HCT116 (cell line): ENCODE measurements at regions of chr12 and their contacts with region 1.

Region 1: GRCh38 chr12:64801381-64801780 is 23.1 kb upstream of the TBC1D30 start:
- DNase-seq: no peak
- ATAC-seq: peak; percentile 80
- H3K4me3 ChIP-seq: no peak overlapping the region
- H3K27ac ChIP-seq: no peak overlapping the region
- H3K4me1 ChIP-seq: peaks cover 0 to 9% of the 10 kb centered on the region in 2 experiments; a peak in 2 of 4 replicates
- H3K27me3 ChIP-seq: no peaks in the 10 kb centered on the region
- CTCF ChIP-seq: peak; percentile 57 to 98 (median 70)
- POLR2A ChIP-seq: no peak
- RAD21 ChIP-seq: peak; percentile 47; the same call in 1 of the 2 replicates

Region 2: GRCh38 chr12:64352181-64352580 is 449.2 kb before region 1 on chr12:
- CTCF ChIA-PET with region 1: no interaction called
- POLR2A ChIA-PET with region 1: no interaction called
- RAD21 ChIA-PET with region 1: no interaction called
- intact Hi-C with region 1: no loop called
- DNase-seq: no peak
- ATAC-seq: no peak
- H3K4me3 ChIP-seq: no peak overlapping the region
- H3K27ac ChIP-seq: no peak overlapping the region
- H3K4me1 ChIP-seq: no peaks in the 10 kb centered on the region
- H3K27me3 ChIP-seq: no peaks in the 10 kb centered on the region
- CTCF ChIP-seq: peak in 1 of 3 experiments; percentile 26; a peak in 2 of 6 replicates
- POLR2A ChIP-seq: no peak
- RAD21 ChIP-seq: no peak

Region 3: DNA sequence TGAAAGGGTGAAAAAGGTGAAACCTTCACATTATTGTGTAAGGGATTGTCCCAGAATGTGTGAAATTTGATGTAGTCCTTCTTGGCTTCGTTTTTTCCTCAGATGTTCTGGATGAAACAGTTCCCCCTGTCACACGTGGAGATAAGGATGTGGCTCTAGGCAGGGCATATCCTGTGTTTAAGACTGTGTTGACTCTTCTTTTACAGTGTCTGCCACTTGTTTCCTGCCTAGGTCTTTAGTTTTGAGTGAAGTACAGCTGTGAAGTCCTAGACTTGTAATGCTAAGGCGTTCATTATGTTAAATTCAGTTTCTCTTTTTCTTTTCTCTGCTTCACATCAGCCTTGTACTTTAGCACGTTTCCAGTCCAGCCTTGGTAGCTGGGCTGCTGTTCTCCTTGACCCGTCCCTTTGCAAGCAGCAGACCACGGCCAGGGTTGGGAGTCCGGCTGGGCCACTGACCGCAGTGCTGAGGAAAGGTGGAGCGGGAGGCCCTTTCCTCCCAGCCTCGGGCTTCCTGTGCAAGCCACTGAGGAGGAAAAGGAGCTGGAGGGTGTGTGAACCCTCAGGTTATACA is 132.0 kb before region 1 on chr12:
- CTCF ChIA-PET with region 1: no interaction called
- POLR2A ChIA-PET with region 1: no interaction called
- RAD21 ChIA-PET with region 1: no interaction called
- intact Hi-C with region 1: no loop called
- DNase-seq: no peak
- ATAC-seq: no peak
- H3K4me3 ChIP-seq: no peak overlapping the region
- H3K27ac ChIP-seq: peak overlapping the region; percentile 80
- H3K4me1 ChIP-seq: peaks cover 69 to 88% of the 10 kb centered on the region in 2 experiments
- H3K27me3 ChIP-seq: no peaks in the 10 kb centered on the region
- CTCF ChIP-seq: no peak
- POLR2A ChIP-seq: no peak
- RAD21 ChIP-seq: no peak

Region 4: GRCh38 chr12:64780531-64781279 is 20.7 kb before region 1 on chr12:
- CTCF ChIA-PET with region 1: interaction called, 23 read pairs
- POLR2A ChIA-PET with region 1: interaction called, 5 read pairs
- RAD21 ChIA-PET with region 1: no interaction called
- intact Hi-C with region 1: no loop called
- DNase-seq: no peak
- ATAC-seq: peak; percentile 85
- H3K4me3 ChIP-seq: peak overlapping the region; percentile 57 to 78
- H3K27ac ChIP-seq: peak overlapping the region; percentile 88
- H3K4me1 ChIP-seq: peaks cover 12 to 20% of the 10 kb centered on the region in 2 experiments
- H3K27me3 ChIP-seq: no peaks in the 10 kb centered on the region
- CTCF ChIP-seq: 0 out of 6 replicates have a peak, but pooled peaks of 1 of the 3 experiments have one; percentile 5
- POLR2A ChIP-seq: peak; percentile 31
- RAD21 ChIP-seq: no peak

Region 5: DNA sequence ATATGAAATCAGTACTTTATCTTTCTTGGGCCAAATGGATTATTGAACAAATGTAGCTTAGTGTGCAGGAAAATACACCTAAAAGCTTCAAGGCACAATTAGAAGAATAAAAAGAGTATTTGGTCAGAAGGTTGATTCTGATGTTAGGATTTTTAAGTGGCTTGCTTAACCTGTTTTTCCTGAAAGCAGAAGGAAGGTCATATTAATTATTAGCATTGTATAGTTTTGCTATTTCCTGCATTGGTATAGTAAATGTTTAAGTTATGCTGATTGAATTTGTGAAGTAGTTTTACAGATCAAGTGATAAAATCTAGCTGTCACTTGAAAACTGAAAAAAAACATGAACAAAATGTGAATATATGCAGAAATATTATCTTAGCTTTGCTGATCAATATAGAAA is 11.2 kb before region 1 on chr12:
- CTCF ChIA-PET with region 1: interaction called, 25 read pairs
- POLR2A ChIA-PET with region 1: interaction called, 4 read pairs
- RAD21 ChIA-PET with region 1: no interaction called
- intact Hi-C with region 1: no loop called
- DNase-seq: no peak
- ATAC-seq: no peak
- H3K4me3 ChIP-seq: no peak overlapping the region
- H3K27ac ChIP-seq: no peak overlapping the region
- H3K4me1 ChIP-seq: no peaks in the 10 kb centered on the region
- H3K27me3 ChIP-seq: no peaks in the 10 kb centered on the region
- CTCF ChIP-seq: no peak
- POLR2A ChIP-seq: no peak
- RAD21 ChIP-seq: no peak

Region 6: GRCh38 chr12:64883596-64884542 is 82.5 kb after region 1 on chr12:
- CTCF ChIA-PET with region 1: interaction called, 11 read pairs
- POLR2A ChIA-PET with region 1: no interaction called
- RAD21 ChIA-PET with region 1: no interaction called
- intact Hi-C with region 1: no loop called
- DNase-seq: no peak
- ATAC-seq: peak; percentile 64
- H3K4me3 ChIP-seq: no peak overlapping the region
- H3K27ac ChIP-seq: no peak overlapping the region
- H3K4me1 ChIP-seq: no peaks in the 10 kb centered on the region
- H3K27me3 ChIP-seq: no peaks in the 10 kb centered on the region
- CTCF ChIP-seq: peak in 1 of 3 experiments; percentile 21; a peak in 2 of 6 replicates
- POLR2A ChIP-seq: no peak
- RAD21 ChIP-seq: no peak

Region 7: DNA sequence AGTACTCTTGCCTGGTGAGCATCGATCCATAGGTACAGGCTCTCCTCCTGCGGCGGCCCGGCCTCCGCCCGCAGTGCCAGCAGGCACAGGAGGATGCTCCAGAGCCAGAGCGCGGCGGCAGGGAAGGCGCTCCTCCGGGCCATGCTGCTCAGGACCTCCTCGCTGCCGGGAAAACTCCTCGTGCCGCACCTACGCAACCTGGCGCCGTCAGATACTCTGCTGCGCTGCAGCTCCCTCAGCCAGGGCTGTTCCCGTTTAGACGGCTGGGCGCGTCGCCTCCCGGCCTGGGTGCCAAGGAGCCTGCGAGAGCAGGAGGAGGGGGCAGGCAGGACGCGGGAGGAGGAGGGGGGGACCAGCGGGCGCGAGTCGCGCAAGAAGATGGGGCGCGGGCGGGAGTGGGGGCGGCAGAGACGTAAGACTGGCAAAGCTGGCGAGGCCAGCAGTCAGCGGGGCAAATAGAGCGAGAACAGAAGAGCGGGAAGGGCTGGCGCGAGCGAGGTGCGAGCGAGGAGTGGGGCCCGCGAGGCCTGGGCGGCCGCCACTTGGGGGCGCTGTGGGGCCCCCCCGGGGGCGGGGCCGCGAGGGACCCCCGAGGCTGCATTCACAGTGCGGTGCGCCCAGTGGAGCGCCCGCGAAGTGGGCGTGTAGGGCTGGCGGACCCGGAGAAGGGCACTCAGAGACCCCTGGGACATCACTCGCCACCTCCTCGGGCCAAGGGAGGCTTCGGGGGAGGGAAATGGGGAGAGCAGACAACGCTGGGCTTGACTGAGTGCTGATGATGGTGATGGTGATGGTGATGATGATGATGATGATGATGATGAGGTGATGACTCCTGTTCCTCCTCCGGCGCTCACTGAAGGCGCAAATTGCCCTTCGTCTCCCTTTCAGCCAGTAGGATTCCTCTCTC is 319.9 kb after region 1 on chr12 and contains the start of gene WIF1:
- CTCF ChIA-PET with region 1: interaction called, 7 read pairs
- POLR2A ChIA-PET with region 1: no interaction called
- RAD21 ChIA-PET with region 1: no interaction called
- intact Hi-C with region 1: loop called (anchors 5 kb)
- DNase-seq: no peak
- ATAC-seq: 0 out of 2 replicates have a peak, but pooled peaks have one; percentile 38
- H3K4me3 ChIP-seq: no peak within 1 kb of the TSS
- H3K27ac ChIP-seq: no peak within 1 kb of the TSS
- H3K4me1 ChIP-seq: no peaks in the 10 kb centered on the region
- H3K27me3 ChIP-seq: peaks cover 34% of the 10 kb centered on the region
- CTCF ChIP-seq: peak in 2 of 3 experiments; percentile 26 to 44; a peak in 3 of 6 replicates
- POLR2A ChIP-seq: no peak
- RAD21 ChIP-seq: no peak
- total RNA-seq, gene WIF1: not detected

Region 8: DNA sequence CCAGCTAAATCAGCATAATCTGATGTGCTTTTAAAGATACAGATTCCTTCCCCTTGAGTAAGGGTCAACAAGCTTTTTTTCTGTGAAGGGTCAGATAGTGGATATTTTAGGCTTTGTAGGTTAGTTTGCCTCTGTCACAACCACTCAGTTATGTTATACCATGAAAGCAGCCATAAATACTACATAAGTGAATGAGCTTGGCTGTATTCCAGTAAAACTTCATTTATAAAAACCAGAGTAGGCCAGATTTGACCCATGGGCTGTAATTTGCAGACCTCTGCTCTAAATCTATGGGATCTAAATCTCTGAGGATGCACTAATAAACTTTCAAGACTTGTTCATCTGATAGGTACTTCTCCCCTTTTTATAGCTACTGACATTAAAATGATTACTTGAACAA is 415.7 kb after region 1 on chr12:
- CTCF ChIA-PET with region 1: no interaction called
- POLR2A ChIA-PET with region 1: no interaction called
- RAD21 ChIA-PET with region 1: no interaction called
- intact Hi-C with region 1: no loop called
- DNase-seq: no peak
- ATAC-seq: no peak
- H3K4me3 ChIP-seq: no peak overlapping the region
- H3K27ac ChIP-seq: no peak overlapping the region
- H3K4me1 ChIP-seq: no peaks in the 10 kb centered on the region
- H3K27me3 ChIP-seq: no peaks in the 10 kb centered on the region
- CTCF ChIP-seq: no peak
- POLR2A ChIP-seq: no peak
- RAD21 ChIP-seq: no peak